ENCODE measurements at regions of chr3 and their contacts with region 1.

Region 1: DNA sequence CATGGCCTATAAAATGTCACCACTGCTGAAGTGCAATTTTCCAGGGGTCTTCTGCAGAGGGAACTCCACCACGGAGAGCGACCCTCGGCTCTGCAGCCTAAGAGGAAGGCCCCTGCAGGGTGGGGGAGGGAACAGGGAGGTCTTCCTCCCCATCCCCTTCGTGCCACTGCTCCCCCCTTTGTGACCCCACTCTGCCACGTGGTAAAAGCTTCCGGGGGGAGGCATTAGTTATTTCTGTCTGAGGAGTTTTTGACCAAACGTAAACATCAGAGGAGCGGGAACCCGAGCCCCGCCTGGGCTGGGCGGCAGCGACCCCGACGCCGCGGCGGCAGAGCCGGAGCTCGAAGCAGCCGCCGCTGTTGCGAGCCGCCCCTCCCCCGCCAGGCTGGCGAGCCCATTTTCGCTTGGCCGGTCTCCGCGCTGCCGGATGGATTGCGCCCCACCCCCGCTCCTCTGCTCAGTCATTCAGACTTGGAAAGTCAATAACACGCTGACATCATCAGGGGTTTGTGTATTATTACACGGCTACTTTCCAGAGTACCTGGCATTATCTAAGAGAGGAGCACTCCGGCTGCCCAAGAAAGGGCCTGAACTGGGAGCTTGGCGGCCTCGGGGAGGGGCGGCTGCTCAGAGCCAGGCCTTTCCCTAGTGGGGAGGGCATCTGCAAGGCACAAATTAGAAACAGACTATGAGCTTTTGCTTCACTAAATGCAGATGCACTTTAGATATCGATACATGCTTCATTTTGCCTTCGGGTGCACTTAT is 162.5 kb upstream of the TBL1XR1 start:
- DNase-seq: peak; percentile 98
- H3K4me3 Mint-ChIP-seq: peak overlapping the region; percentile 81
- H3K27ac Mint-ChIP-seq: peak overlapping the region; percentile 96
- H3K4me1 Mint-ChIP-seq: peaks cover 53% of the 10 kb centered on the region
- H3K27me3 Mint-ChIP-seq: peaks cover 2% of the 10 kb centered on the region

Region 2: DNA sequence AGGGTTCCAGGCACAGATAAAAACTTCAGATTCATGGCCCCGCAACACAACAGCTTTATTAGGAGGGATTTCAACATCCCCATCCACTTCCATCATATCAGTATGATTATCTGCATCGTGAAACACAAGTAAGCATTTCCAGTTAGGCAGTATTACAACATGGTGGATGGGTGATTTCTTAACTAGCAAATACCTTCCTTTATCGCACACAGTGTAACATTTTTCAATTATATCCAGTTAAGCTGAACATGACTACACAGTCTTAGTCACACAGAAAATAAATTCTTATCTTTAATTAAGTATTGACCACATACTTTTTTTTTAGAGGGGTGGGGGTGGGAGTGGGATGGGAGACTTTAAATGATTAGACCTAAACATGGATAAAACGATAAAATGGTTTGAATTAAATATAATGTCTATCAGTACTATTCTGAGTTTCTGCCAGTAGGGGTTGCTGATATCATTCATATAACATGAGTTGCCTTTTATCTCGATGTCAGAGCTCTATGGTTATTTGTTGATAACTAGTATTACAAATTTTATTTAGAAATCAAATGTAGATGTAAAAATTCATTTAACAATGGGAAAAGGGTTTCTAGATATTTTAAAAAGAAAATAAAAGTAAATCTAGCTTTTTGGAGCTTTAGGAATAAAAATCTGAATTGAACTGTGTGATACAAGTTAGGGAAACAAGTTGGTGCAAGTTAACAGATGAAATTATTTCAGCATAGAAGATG is 309.1 kb before region 1 on chr3:
- intact Hi-C with region 1: loop called (anchors 2 kb)
- DNase-seq: no peak
- H3K4me3 Mint-ChIP-seq: no peak overlapping the region
- H3K27ac Mint-ChIP-seq: no peak overlapping the region
- H3K4me1 Mint-ChIP-seq: peaks cover 17% of the 10 kb centered on the region
- H3K27me3 Mint-ChIP-seq: no peaks in the 10 kb centered on the region

Region 3: DNA sequence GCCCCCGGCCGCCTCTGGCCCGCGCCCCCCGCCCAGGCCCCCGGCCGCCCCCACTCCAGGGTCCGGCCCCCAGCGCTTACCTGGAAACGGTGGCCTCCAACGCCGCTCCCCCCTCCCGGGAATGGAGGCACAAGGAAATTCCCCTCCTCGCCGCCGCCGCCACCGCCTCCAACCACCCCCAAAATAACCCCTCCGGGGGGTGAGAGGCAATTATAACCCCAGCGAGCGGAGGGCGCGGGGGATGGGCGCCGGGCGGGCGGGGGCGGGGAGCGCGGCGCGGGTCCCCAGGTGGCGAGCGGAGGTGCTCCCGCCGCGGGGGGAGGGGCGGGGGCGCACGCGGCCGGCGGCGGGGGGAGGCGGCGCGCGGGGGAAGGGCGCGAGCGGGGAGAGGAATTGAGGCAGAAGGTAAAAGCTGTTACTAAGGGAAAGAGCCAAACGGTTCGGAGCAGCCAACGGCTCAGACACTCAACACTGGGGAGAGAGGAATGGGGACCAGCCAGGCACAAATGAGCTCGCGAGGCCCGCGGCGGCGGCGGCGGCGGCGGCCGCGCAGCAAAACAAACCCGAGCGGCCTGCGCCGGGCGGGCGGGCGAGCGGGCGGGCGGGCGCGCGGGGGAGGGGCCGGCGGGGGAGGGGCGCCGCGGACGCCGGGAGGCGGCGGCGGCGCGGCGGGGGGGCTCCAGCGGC is 162.6 kb before region 1 on chr3 and contains the start of gene TBL1XR1:
- intact Hi-C with region 1: loop called (anchors 1 kb)
- DNase-seq: peak; percentile 96
- H3K4me3 Mint-ChIP-seq: peak within 1 kb of the TSS; percentile 88
- H3K27ac Mint-ChIP-seq: peak within 1 kb of the TSS; percentile 98
- H3K4me1 Mint-ChIP-seq: peaks cover 52% of the 10 kb centered on the region
- H3K27me3 Mint-ChIP-seq: no peaks in the 10 kb centered on the region
- total RNA-seq, gene TBL1XR1: 160 and 178 TPM in 2 replicates

Region 4: DNA sequence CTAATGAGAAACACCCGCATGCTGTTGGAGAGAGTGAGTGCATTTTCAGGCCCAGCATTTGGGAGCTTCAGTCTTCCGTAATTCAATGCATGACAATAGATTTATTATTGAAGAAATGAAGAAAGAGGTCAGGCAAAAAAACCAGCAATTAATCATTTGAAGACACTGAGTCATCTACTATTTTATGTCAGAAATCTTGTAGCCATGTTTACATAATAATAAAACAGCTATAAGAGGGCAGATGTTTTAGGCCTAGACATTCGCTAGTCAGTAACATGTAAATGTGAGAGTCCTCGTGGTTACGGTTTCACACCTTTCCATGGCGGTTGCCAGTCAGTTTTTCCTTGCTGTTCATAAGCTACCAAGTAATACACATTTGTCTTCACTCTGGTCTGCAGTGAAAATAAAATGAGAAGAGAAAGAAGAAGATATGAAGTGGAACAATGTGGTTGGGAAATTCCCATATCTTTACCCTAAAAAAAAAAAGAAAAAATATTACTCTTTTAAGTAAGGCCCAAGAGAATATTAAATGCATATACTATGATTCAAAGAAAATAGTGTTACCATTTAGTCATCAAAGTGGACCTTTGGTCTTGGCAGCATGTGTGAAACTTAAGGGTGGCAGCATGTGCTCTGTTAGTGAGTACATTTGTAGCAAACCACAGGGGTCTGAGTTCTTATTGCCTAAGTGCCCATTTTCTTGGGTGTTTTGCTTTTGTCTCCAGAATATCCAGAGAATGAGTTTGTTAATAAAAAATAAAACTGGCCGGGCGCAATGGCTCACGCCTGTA is 22.0 kb before region 1 on chr3:
- intact Hi-C with region 1: loop called (anchors 1 kb)
- DNase-seq: peak; percentile 87
- H3K4me3 Mint-ChIP-seq: peak overlapping the region; percentile 29
- H3K27ac Mint-ChIP-seq: peak overlapping the region; percentile 84
- H3K4me1 Mint-ChIP-seq: peaks cover 41% of the 10 kb centered on the region
- H3K27me3 Mint-ChIP-seq: no peaks in the 10 kb centered on the region

Region 5: DNA sequence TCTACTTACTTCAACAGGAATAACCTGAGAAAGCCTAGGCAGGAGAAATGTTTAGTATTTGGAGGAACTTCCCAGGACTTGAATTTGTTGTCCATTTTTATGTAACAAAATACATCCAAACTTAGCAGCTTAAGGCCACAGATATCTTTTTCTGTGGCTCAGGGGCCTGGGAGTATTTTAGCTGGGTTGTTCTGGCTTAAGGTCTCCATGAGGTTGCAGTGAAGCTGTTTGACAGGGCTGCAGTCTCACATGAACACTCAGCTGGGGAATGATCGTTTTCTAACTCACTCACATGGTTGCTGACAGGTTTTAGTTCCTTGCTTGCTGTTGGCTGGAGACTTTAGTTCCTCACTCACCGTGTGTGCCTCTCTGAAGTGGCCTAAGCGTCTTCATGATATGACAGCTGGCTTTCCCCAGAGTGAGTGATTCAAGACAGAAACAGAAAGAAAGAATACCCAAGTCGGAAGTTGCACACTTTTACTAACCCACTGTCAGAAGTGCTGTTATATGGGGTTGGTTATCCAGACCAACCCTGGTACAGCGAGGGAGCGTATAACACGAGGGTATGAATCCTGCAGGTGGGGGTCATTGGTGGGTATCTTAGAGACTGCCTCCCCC is 67.2 kb after region 1 on chr3:
- intact Hi-C with region 1: loop called (anchors 1 kb)
- DNase-seq: peak; percentile 88
- H3K4me3 Mint-ChIP-seq: peak overlapping the region; percentile 65
- H3K27ac Mint-ChIP-seq: peak overlapping the region; percentile 91
- H3K4me1 Mint-ChIP-seq: peaks cover 31% of the 10 kb centered on the region
- H3K27me3 Mint-ChIP-seq: peaks cover 9% of the 10 kb centered on the region

Region 6: GRCh38 chr3:177994976-177995375 is 635.2 kb after region 1 on chr3:
- intact Hi-C with region 1: loop called (anchors 1 kb)
- DNase-seq: no peak
- H3K4me3 Mint-ChIP-seq: peak overlapping the region; percentile 21
- H3K27ac Mint-ChIP-seq: peak overlapping the region; percentile 61
- H3K4me1 Mint-ChIP-seq: peaks cover 28% of the 10 kb centered on the region
- H3K27me3 Mint-ChIP-seq: no peaks in the 10 kb centered on the region

Measured in activated CD4-positive, alpha-beta T cell treated with anti-CD3 and anti-CD28 coated beads, Interleukin-2, amount 10 ng/mL, durations not matched to agents 24 days and 14 days (primary cell).